CD4-positive, alpha-beta T cell (primary cell): ENCODE measurements at regions of chr4 and their contacts with region 1.

Region 1: GRCh38 chr4:1011022-1011694 is at the start of gene FGFRL1:
- DNase-seq: peak; percentile 84 to 97 (median 93)
- ATAC-seq: peak; percentile 58
- H3K4me3 ChIP-seq: peak within 1 kb of the TSS; percentile 66
- H3K4me3 Mint-ChIP-seq: peak within 1 kb of the TSS; percentile 91
- H3K27ac ChIP-seq: peak within 1 kb of the TSS; percentile 60 to 62
- H3K27ac Mint-ChIP-seq: peak within 1 kb of the TSS; percentile 97
- H3K4me1 ChIP-seq: peaks cover 31% of the 10 kb centered on the region
- H3K4me1 Mint-ChIP-seq: peaks cover 14% of the 10 kb centered on the region
- H3K27me3 ChIP-seq: peaks cover 13 to 19% of the 10 kb centered on the region in 2 experiments
- H3K27me3 Mint-ChIP-seq: peaks cover 37% of the 10 kb centered on the region
- CTCF ChIP-seq: no peak
- total RNA-seq, gene FGFRL1: 21.8 to 25.0 TPM

Region 2: GRCh38 chr4:973431-974397 is 37.4 kb before region 1 on chr4 and contains the start of gene DGKQ:
- CTCF ChIA-PET with region 1: interaction called, 3 read pairs
- POLR2A ChIA-PET with region 1: interaction called, 5 read pairs
- intact Hi-C with region 1: loop called in 1 of 2 experiments (anchors 1 kb)
- DNase-seq: peak; percentile 78 to 96 (median 90)
- ATAC-seq: peak; percentile 94
- H3K4me3 ChIP-seq: peak within 1 kb of the TSS; percentile 63
- H3K4me3 Mint-ChIP-seq: peak within 1 kb of the TSS; percentile 60
- H3K27ac ChIP-seq: no peak within 1 kb of the TSS
- H3K27ac Mint-ChIP-seq: no peak within 1 kb of the TSS
- H3K4me1 ChIP-seq: peaks cover 32% of the 10 kb centered on the region
- H3K4me1 Mint-ChIP-seq: no peaks in the 10 kb centered on the region
- H3K27me3 ChIP-seq: no peaks in the 10 kb centered on the region
- H3K27me3 Mint-ChIP-seq: no peaks in the 10 kb centered on the region
- CTCF ChIP-seq: no peak
- total RNA-seq, gene DGKQ: 17.6 to 19.2 TPM

Region 3: GRCh38 chr4:1039493-1040343 is 28.6 kb after region 1 on chr4:
- CTCF ChIA-PET with region 1: no interaction called
- POLR2A ChIA-PET with region 1: no interaction called
- intact Hi-C with region 1: no loop called
- DNase-seq: no peak
- ATAC-seq: no peak
- H3K4me3 ChIP-seq: no peak overlapping the region
- H3K4me3 Mint-ChIP-seq: no peak overlapping the region
- H3K27ac ChIP-seq: no peak overlapping the region
- H3K27ac Mint-ChIP-seq: no peak overlapping the region
- H3K4me1 ChIP-seq: no peaks in the 10 kb centered on the region
- H3K4me1 Mint-ChIP-seq: no peaks in the 10 kb centered on the region
- H3K27me3 ChIP-seq: peaks cover 9 to 13% of the 10 kb centered on the region in 2 experiments
- H3K27me3 Mint-ChIP-seq: peaks cover 10% of the 10 kb centered on the region
- CTCF ChIP-seq: no peak

Region 4: GRCh38 chr4:1050486-1051213 is 39.5 kb after region 1 on chr4:
- CTCF ChIA-PET with region 1: no interaction called
- POLR2A ChIA-PET with region 1: interaction called, 14 read pairs
- intact Hi-C with region 1: loop called (anchors 5 kb)
- DNase-seq: no peak
- ATAC-seq: no peak
- H3K4me3 ChIP-seq: no peak overlapping the region
- H3K4me3 Mint-ChIP-seq: no peak overlapping the region
- H3K27ac ChIP-seq: no peak overlapping the region
- H3K27ac Mint-ChIP-seq: no peak overlapping the region
- H3K4me1 ChIP-seq: peaks cover 8% of the 10 kb centered on the region
- H3K4me1 Mint-ChIP-seq: peaks cover 4% of the 10 kb centered on the region
- H3K27me3 ChIP-seq: peaks cover 10 to 14% of the 10 kb centered on the region in 2 experiments
- H3K27me3 Mint-ChIP-seq: peaks cover 25% of the 10 kb centered on the region
- CTCF ChIP-seq: no peak

Region 5: GRCh38 chr4:1072830-1073446 is 61.8 kb after region 1 on chr4:
- CTCF ChIA-PET with region 1: no interaction called
- POLR2A ChIA-PET with region 1: no interaction called
- intact Hi-C with region 1: loop called in 1 of 2 experiments (anchors 5 kb)
- DNase-seq: peak; percentile 18 to 73 (median 46)
- ATAC-seq: peak; percentile 98
- H3K4me3 ChIP-seq: no peak overlapping the region
- H3K4me3 Mint-ChIP-seq: no peak overlapping the region
- H3K27ac ChIP-seq: no peak overlapping the region
- H3K27ac Mint-ChIP-seq: no peak overlapping the region
- H3K4me1 ChIP-seq: peaks cover 5% of the 10 kb centered on the region
- H3K4me1 Mint-ChIP-seq: peaks cover 13% of the 10 kb centered on the region
- H3K27me3 ChIP-seq: no peaks in the 10 kb centered on the region
- H3K27me3 Mint-ChIP-seq: peaks cover 5% of the 10 kb centered on the region
- CTCF ChIP-seq: peak; percentile 71